ENCODE measurements at regions of chr3 and their contacts with region 1.

Region 1: DNA sequence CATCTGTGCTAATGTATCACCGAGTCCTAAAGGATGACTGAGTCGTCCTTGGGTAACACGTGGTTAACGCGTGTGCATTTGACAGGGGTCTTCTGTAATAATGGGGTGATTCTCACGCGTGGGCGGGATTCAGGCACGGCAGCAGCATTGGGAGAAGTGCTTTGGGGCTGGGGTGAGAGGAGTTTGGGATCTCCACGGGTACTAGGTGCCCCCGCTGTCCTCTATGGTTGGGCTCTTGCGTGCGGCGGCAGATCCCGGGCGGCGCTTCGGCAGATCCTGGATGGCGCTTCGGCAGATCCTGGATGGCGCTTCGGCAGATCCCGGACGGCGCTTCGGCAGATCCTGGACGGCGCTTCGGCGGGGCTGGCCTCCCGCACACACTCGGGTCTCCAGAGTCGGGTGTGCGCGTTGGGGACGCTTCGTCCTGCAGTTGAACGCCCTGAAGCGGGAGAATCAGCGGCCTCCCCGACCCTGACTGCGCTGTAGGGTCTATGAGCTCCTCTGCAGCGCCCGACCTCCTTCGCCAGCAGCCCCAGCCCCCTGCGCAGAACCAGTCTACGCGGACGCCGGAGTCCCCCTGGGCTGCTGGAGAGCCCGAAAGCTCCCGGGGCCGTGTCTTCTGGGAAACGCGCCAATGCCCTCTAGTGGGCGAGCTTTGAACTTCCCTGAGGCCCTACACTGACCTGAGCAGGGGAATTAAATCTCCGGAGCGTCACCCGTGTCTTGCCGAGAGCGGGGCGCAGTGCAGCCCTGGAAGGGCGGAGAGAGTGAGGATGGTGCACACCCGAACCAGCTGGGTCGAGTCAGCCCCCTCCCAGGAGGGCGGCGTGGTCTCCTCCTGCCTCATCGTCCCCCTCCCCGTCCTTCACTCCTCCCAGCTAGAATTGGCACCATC is 48.1 kb upstream of the EPHB3 start:
- DNase-seq: peak; percentile 75 to 95
- H3K4me3 ChIP-seq: peak overlapping the region; percentile 13 to 61 (median 50)
- H3K27ac ChIP-seq: no peak overlapping the region
- H3K4me1 ChIP-seq: peaks cover 0 to 5% (median 1%) of the 10 kb centered on the region in 4 experiments; a peak in 2 of 7 replicates
- H3K27me3 ChIP-seq: peaks cover 10 to 27% (median 17%) of the 10 kb centered on the region in 4 experiments
- CTCF ChIP-seq: peak; percentile 75 to 86 (median 79)
- EP300 ChIP-seq: no peak
- POLR2A ChIP-seq: no peak
- RAD21 ChIP-seq: peak; percentile 81 to 86

Region 2: GRCh38 chr3:184417619-184418327 is 95.8 kb before region 1 on chr3:
- CTCF ChIA-PET with region 1: interaction called, 10 read pairs
- POLR2A ChIA-PET with region 1: no interaction called
- DNase-seq: peak; percentile 19 to 84
- H3K4me3 ChIP-seq: no peak overlapping the region
- H3K27ac ChIP-seq: no peak overlapping the region
- H3K4me1 ChIP-seq: peaks cover 0 to 5% (median 4%) of the 10 kb centered on the region in 4 experiments; a peak in 2 of 7 replicates
- H3K27me3 ChIP-seq: no peaks in the 10 kb centered on the region
- CTCF ChIP-seq: peak; percentile 93 to 97 (median 96)
- EP300 ChIP-seq: no peak
- POLR2A ChIP-seq: no peak
- RAD21 ChIP-seq: peak; percentile 89 to 90

Region 3: GRCh38 chr3:184481984-184482671 is 31.4 kb before region 1 on chr3:
- CTCF ChIA-PET with region 1: interaction called, 17 read pairs
- POLR2A ChIA-PET with region 1: no interaction called
- DNase-seq: no peak
- H3K4me3 ChIP-seq: no peak overlapping the region
- H3K27ac ChIP-seq: no peak overlapping the region
- H3K4me1 ChIP-seq: no peaks in the 10 kb centered on the region
- H3K27me3 ChIP-seq: no peaks in the 10 kb centered on the region
- CTCF ChIP-seq: no peak
- EP300 ChIP-seq: no peak
- POLR2A ChIP-seq: no peak
- RAD21 ChIP-seq: no peak

Region 4: DNA sequence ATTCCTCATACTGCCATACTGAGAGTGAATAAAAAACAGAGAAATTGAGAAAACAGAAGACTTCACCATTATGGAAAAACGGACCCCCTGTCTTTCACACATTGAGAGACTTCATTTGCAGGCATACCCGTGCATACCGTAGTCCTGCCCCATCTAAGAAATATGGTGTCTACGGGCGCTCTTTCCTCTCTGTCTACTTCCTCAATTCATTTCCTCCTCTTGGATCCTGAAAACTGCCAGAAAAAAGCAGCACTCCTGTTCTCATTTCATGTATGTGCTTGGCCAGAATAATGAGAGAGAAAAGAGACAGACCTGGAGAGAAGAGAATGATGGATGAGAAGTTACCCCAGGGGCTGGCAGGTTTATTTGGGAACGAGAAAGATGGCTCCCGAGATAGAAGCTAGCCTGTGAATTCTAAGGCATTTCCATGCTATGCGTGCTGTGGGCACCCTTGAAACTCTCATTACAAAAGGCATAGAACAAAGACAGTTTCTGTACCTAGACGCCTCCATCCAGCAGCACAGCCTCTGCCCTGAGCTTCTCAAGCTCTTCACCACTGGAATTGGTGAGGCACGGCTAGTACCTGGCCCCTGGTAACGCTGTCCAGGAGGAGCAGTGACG is 14.4 kb before region 1 on chr3:
- CTCF ChIA-PET with region 1: interaction called, 17 read pairs
- POLR2A ChIA-PET with region 1: interaction called, 6 read pairs
- DNase-seq: no peak
- H3K4me3 ChIP-seq: no peak overlapping the region
- H3K27ac ChIP-seq: no peak overlapping the region
- H3K4me1 ChIP-seq: peaks cover 0 to 6% (median 4%) of the 10 kb centered on the region in 4 experiments; a peak in 5 of 7 replicates
- H3K27me3 ChIP-seq: peaks cover 0 to 3% (median 2%) of the 10 kb centered on the region in 4 experiments; a peak in 2 of 7 replicates
- CTCF ChIP-seq: no peak
- EP300 ChIP-seq: no peak
- POLR2A ChIP-seq: no peak
- RAD21 ChIP-seq: no peak

Region 5: DNA sequence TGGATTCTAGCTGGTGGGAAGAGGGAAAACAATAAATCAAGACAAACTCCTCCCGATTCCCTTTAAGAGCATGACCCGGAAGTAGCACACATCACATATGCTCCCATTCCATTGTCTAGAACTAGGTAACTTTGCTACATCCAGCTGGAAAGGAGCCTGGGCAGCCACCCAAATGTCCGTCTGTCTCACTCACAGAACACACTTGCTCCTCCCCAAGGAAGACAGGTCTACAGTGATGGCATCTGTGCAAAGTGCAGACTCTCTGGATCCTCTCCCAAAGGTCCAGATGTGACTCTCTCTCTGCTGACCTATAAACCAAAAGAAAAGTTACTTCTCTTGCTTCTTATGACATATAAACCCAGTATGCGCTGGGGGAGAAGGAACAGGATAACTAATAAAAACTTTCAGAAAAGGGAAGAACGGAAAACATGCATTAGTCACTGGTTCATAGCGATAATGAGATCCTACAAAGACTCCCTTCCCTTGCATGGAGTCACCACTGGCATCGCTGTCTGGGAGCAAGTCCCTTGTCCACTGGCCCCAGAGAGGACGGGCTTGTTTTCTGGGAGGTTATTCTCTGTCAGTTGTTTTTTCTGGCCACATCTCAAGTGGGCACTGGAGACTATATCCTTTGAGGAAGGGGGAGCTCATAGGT is 18.2 kb after region 1 on chr3:
- CTCF ChIA-PET with region 1: interaction called, 135 read pairs
- POLR2A ChIA-PET with region 1: interaction called, 14 read pairs
- DNase-seq: no peak
- H3K4me3 ChIP-seq: no peak overlapping the region
- H3K27ac ChIP-seq: no peak overlapping the region
- H3K4me1 ChIP-seq: peaks cover 0 to 4% (median under 1%) of the 10 kb centered on the region in 4 experiments; a peak in 3 of 7 replicates
- H3K27me3 ChIP-seq: no peaks in the 10 kb centered on the region
- CTCF ChIP-seq: no peak
- EP300 ChIP-seq: no peak
- POLR2A ChIP-seq: no peak
- RAD21 ChIP-seq: no peak

Measured in H1 (cell line).